ENCODE measurements at regions of chr5 and their contacts with region 1.

Region 1: GRCh38 chr5:66306105-66306843 is 162.2 kb downstream of the SREK1 start:
- DNase-seq: no peak

Region 2: GRCh38 chr5:66498791-66499207 is 192.5 kb after region 1 on chr5:
- intact Hi-C with region 1: loop called (anchors 1 kb)
- DNase-seq: no peak

Region 3: DNA sequence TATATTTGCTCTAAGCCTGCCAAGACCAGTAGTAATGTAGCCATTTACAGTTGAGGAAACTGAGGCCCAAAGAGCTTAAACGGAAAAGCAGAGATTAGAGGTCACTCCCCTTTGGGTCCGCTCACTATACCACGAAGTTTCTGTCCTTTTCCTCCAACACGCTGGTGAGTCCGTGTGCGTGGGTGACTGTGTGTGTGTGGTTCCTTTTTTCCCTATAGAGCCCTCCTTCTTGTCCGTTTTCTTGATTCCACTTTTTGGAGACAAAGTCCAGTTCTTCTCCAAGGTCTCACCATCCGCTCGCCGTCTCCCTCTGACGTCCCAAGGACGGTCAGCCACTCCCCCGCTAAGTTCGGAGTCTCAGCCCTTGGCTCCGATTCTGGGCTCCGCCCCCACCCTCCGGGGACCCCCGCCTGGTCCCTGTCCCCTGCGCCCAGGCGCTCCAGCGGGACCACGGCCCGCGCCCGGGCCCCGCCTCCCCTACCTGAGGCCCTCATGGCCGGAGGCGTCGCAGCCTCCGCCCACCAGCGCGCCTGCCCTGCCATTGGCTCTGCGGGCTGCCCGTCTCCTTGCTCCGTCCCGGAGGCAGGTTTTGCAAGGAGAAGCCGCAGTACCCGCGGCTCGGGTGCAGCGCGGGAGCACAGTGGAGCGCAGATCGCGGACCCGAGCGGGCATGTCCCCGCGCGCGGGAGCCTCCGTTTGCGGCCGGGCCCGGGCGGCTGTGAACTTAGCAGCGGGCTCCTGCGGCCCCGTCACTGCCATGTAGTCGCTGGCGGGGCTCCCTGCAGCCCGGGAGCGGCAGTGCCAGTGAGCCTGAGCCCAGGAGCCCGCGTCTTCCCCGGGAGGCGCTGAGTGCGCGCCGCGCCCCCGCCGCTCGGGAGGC is 289.7 kb after region 1 on chr5 and contains the start of gene MAST4:
- intact Hi-C with region 1: loop called (anchors 5 kb)
- DNase-seq: peak; percentile 94
- total RNA-seq, gene MAST4: 91.4 TPM

Region 4: GRCh38 chr5:66757834-66758371 is 451.6 kb after region 1 on chr5:
- intact Hi-C with region 1: loop called (anchors 1 kb)
- DNase-seq: no peak